ENCODE measurements at regions of chr22 and their contacts with region 1.

Region 1: DNA sequence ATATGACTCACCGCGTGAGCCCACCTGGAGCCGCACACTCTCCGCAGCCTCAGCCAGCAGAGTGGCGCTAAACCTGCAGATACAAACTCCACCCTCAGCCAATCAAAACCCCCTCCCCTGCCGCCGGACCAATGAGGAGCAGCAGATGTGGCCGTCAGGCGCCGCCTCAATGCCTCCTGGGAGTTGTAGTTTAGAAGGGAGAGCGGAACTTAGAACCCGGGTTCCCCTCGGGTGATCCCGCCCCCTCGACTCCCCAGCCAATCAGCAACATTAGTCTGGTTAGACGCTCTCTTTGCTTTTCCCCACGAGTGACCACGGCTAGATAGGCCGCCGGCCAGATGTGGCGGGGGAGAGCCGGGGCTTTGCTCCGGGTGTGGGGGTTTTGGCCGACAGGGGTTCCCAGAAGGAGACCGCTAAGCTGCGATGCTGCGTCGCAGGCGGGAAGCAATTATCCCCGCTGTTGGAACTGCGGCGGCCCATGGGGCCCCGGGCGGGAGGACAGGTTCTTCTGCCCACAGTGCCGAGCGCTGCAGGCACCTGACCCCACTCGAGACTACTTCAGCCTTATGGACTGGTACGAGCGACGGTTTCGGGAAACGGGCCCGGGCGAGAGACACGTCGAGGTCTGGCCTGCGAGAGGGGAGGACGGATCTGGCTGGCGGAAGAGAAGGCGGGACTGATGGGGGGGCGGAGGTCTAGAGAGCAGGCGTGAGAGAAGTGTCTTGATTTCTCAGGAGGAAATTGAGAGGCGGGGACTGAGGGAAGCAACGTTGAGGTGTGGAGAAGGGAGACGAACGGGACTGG is at the starts of genes CHEK2 and HSCB:
- DNase-seq: peak; percentile 98
- ATAC-seq: peak; percentile 91
- H3K4me3 ChIP-seq: peak within 1 kb of the TSS; percentile 74 to 99 (median 84)
- H3K4me3 Mint-ChIP-seq: peak within 1 kb of the TSS; percentile 87
- H3K27ac ChIP-seq: peak within 1 kb of the TSS; percentile 86 to 95
- H3K27ac Mint-ChIP-seq: peak within 1 kb of the TSS; percentile 83
- H3K4me1 ChIP-seq: peaks cover 10 to 18% of the 10 kb centered on the region in 2 donors
- H3K4me1 Mint-ChIP-seq: peaks cover 26% of the 10 kb centered on the region
- H3K27me3 ChIP-seq: no peaks in the 10 kb centered on the region
- H3K27me3 Mint-ChIP-seq: no peaks in the 10 kb centered on the region
- CTCF ChIP-seq: no peak
- total RNA-seq, gene CHEK2: 13.9 and 15.6 TPM in 2 replicates
- total RNA-seq, gene HSCB: 17.5 and 18.3 TPM in 2 replicates

Region 2: GRCh38 chr22:27919222-27919941 is 822.6 kb before region 1 on chr22 and contains the start of gene PITPNB:
- CTCF ChIA-PET with region 1: no interaction called
- POLR2A ChIA-PET with region 1: no interaction called
- intact Hi-C with region 1: loop called (anchors 5 kb)
- DNase-seq: peak; percentile 100
- ATAC-seq: peak; percentile 88
- H3K4me3 ChIP-seq: peak within 1 kb of the TSS; percentile 86 to 97 (median 91)
- H3K4me3 Mint-ChIP-seq: peak within 1 kb of the TSS; percentile 99
- H3K27ac ChIP-seq: peak within 1 kb of the TSS; percentile 97 to 98
- H3K27ac Mint-ChIP-seq: peak within 1 kb of the TSS; percentile 99
- H3K4me1 ChIP-seq: peaks cover 20 to 29% of the 10 kb centered on the region in 2 donors
- H3K4me1 Mint-ChIP-seq: peaks cover 57% of the 10 kb centered on the region
- H3K27me3 ChIP-seq: no peaks in the 10 kb centered on the region
- H3K27me3 Mint-ChIP-seq: no peaks in the 10 kb centered on the region
- CTCF ChIP-seq: no peak
- total RNA-seq, gene PITPNB: 81.0 and 82.3 TPM in 2 replicates

Region 3: DNA sequence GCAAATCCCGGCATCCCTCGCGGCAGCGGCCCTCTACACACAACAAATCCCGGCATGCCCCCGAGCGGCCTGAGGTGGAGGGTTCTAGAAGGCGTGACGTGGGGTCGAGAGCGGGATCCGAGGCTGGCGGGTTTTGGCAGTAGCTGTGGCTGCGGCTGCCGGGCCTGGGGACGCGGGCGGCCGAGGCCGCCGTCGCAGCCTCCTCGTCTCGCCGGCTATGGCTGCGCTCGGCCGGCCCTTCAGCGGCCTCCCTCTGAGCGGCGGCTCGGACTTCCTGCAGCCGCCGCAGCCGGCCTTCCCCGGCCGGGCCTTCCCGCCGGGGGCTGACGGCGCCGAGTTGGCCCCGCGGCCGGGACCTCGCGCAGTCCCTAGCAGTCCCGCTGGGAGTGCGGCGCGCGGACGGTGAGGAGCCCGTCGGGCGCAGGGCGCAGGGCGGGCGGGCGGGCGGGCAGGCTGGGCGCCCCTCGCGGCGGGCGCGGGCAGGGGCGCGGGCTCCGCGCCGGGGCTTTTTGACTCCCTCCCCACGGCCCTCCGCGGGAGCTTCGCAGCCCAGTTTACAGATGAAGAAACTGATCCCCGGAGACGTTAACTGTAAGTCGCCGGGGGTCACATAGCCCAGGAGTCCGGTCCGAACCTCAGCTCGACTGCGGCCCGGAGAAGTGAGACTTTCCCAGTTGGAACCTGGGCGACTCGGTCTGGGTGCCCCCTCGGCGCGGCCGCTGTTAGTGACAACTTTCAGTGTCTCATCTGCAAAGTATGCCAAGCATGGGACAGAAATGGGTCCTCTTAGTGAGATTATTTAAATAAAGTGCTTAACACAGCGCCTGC is 30.9 kb after region 1 on chr22 and contains the start of gene CCDC117:
- CTCF ChIA-PET with region 1: interaction called, 3 read pairs
- POLR2A ChIA-PET with region 1: interaction called, 5 read pairs
- intact Hi-C with region 1: loop called (anchors 1 kb)
- DNase-seq: peak; percentile 94
- ATAC-seq: peak; percentile 90
- H3K4me3 ChIP-seq: peak within 1 kb of the TSS; percentile 68 to 93 (median 75)
- H3K4me3 Mint-ChIP-seq: peak within 1 kb of the TSS; percentile 94
- H3K27ac ChIP-seq: peak within 1 kb of the TSS; percentile 80 to 95
- H3K27ac Mint-ChIP-seq: peak within 1 kb of the TSS; percentile 97
- H3K4me1 ChIP-seq: peaks cover 19 to 24% of the 10 kb centered on the region in 2 donors
- H3K4me1 Mint-ChIP-seq: peaks cover 19% of the 10 kb centered on the region
- H3K27me3 ChIP-seq: no peaks in the 10 kb centered on the region
- H3K27me3 Mint-ChIP-seq: no peaks in the 10 kb centered on the region
- CTCF ChIP-seq: peak; percentile 24
- total RNA-seq, gene CCDC117: 25.6 and 25.8 TPM in 2 replicates

Region 4: DNA sequence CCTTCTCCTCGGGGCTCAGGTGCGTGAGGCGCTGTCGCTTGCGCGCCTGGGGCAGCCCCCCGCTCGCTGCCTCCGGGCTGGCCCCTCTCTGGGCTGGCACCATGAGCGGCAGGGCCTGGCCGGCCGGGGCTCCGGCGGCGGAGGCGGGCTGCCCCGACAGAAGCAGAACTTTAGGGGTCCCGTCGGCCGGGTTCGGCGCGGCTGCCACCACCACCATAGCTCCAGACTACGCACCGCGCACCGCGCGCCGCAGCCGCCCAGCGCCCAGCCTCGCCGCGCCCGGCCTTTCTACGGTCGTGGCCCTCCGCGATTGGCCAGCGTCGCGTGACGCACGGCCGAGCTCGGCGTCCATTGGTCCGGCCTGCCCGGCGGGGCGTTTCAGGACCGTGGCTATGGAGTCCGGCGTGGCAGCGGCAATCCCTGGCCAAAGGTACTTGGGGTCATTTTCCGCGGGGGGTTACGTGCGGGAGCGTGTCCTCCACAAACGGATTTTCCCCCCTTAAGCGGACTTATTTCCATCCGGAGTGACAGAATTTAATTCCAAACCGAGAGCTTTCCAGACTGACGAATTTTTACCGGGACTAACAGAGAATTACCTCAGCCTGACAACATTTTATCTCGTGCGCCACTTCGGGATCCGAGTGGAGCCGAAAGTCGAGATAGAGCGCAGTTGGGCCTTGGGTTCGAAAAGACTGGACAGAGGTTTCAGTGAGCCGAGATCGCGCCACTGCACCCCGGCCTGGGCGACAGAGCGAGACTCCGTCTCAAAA is 58.5 kb after region 1 on chr22 and contains the start of gene XBP1:
- CTCF ChIA-PET with region 1: interaction called, 3 read pairs
- POLR2A ChIA-PET with region 1: no interaction called
- intact Hi-C with region 1: loop called (anchors 1 kb)
- DNase-seq: peak; percentile 94
- ATAC-seq: peak; percentile 97
- H3K4me3 ChIP-seq: peak within 1 kb of the TSS; percentile 71 to 98 (median 91)
- H3K4me3 Mint-ChIP-seq: peak within 1 kb of the TSS; percentile 98
- H3K27ac ChIP-seq: peak within 1 kb of the TSS; percentile 63 to 96
- H3K27ac Mint-ChIP-seq: peak within 1 kb of the TSS; percentile 96
- H3K4me1 ChIP-seq: peaks cover 27 to 40% of the 10 kb centered on the region in 2 donors
- H3K4me1 Mint-ChIP-seq: peaks cover 51% of the 10 kb centered on the region
- H3K27me3 ChIP-seq: no peaks in the 10 kb centered on the region
- H3K27me3 Mint-ChIP-seq: no peaks in the 10 kb centered on the region
- CTCF ChIP-seq: no peak
- total RNA-seq, gene XBP1: 16.8 and 18.2 TPM in 2 replicates

Region 5: DNA sequence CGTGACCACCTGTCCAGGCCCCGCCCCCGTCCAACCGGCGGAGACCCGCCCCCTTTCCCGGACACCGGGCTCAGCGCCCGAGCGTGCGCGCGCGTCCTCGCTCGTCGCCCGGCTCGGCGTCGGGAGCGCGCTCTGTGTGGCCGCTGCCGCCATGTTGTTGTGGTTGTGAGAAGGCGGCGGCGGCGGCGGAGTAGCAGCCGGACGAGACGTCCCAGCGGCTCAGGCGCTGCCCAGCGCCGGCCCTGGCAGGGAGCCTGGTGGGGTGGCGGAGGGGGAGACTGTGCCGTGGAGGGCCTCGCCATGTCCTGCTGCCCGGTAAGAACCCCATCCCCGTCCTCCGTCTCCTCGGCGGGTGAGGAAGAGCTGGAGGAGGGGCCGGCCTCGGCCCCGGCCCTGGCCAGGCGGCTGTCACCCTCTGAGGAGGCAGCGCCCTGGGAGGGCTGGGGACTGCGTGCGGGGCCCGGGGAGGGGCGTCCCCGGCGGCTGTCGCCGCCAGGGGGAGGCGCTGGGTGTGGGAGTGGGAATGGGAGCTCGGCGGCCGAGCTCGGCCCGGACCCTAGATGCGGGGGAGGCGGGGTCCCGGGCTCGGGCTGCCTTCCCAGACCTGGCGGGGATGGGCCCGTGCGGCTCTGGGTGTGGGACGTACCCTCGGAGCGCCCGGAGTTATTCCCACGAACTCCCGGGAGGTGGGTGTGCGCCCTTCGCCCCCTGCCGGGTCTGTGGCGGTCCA is 1141.2 kb after region 1 on chr22 and contains the start of gene MTMR3:
- CTCF ChIA-PET with region 1: no interaction called
- POLR2A ChIA-PET with region 1: no interaction called
- intact Hi-C with region 1: loop called (anchors 5 kb)
- DNase-seq: peak; percentile 94
- ATAC-seq: peak; percentile 80
- H3K4me3 ChIP-seq: peak within 1 kb of the TSS; percentile 76 to 99 (median 87)
- H3K4me3 Mint-ChIP-seq: peak within 1 kb of the TSS; percentile 92
- H3K27ac ChIP-seq: peak within 1 kb of the TSS; percentile 71 to 91
- H3K27ac Mint-ChIP-seq: peak within 1 kb of the TSS; percentile 86
- H3K4me1 ChIP-seq: peaks cover 21% of the 10 kb centered on the region in 2 donors
- H3K4me1 Mint-ChIP-seq: peaks cover 12% of the 10 kb centered on the region
- H3K27me3 ChIP-seq: no peaks in the 10 kb centered on the region
- H3K27me3 Mint-ChIP-seq: no peaks in the 10 kb centered on the region
- CTCF ChIP-seq: peak; percentile 47
- total RNA-seq, gene MTMR3: 67.8 and 76.5 TPM in 2 replicates

Measured in B cell (primary cell).